ENCODE measurements at regions of chr20 and their contacts with region 1.

Region 1: DNA sequence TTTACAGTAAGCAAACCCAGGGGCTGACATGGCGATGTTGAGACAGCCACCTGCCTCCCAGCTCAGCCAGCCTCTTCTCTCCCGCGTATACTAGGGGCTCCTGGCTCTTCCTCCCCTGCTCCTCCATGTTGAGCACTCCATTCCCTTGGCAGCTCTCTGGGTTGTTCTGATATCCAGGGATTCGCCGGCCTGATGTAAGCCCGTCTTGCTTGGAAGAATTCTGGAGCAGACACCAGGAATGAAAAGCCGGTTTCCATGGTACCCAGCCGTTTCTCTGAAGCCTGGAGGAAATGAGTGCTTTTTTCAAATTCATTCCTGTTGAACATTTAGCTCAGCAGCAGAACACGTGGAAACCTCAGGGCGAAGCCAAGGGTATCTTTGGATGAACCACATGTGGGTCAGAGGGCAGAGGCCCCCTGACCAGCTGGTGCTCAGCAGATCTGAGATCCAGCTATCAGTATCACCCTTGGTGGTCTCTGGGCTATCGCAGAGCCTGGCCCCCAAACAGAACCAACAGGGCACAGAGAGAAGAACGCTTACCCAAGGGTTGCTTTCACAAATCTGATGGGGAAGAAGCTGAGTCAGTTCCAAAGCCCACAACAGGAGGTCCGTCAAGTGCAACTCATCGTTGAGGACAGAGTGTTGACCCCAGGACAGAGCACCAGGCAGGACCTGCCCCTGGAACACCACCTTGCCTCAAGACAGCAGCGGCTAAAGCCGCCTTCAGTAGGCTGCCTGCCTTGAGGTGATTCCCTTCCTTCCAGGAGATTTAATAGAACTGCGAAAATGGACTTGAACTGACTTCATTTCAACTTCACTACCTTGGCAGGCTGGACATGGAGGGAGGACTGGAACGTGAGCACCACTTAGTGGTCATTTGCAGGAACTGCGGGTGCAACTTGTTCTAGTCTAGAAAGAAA is 96.1 kb upstream of the RIN2 start:
- DNase-seq: peak; percentile 73
- ATAC-seq: peak; percentile 85
- H3K4me3 ChIP-seq: no peak overlapping the region
- H3K27ac ChIP-seq: no peak overlapping the region
- H3K4me1 ChIP-seq: no peaks in the 10 kb centered on the region
- H3K27me3 ChIP-seq: peaks cover 20% of the 10 kb centered on the region
- CTCF ChIP-seq: peak; percentile 96

Region 2: DNA sequence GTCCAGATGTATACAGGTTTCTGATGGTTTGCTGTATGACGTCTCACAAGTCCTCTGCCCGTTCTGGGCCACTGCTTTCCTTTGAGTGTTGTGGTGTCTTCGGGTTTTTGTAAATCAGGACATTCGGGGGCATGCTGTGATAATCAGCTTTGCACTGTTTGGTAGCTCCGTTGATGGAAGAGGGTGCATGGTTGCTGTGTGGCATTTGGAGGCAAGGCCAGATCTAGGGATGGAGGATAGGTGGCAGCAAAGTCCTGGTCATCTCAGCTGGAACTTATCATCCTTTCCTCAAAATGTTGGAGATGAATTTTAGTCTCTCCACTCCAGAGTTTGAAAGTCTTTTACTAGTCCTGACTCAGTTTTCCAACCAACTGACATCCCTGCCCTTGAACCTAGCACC is 757.4 kb before region 1 on chr20:
- CTCF ChIA-PET with region 1: no interaction called
- POLR2A ChIA-PET with region 1: no interaction called
- in situ Hi-C with region 1: no loop called
- intact Hi-C with region 1: loop called (anchors 10 kb)
- DNase-seq: peak; percentile 1
- ATAC-seq: no peak
- H3K4me3 ChIP-seq: no peak overlapping the region
- H3K27ac ChIP-seq: no peak overlapping the region
- H3K4me1 ChIP-seq: no peaks in the 10 kb centered on the region
- H3K27me3 ChIP-seq: no peaks in the 10 kb centered on the region
- CTCF ChIP-seq: peak; percentile 38; the same call in 1 of the 2 replicates

Region 3: GRCh38 chr20:19205977-19206396 is 456.0 kb before region 1 on chr20:
- CTCF ChIA-PET with region 1: no interaction called
- POLR2A ChIA-PET with region 1: no interaction called
- in situ Hi-C with region 1: no loop called
- intact Hi-C with region 1: loop called (anchors 5 kb)
- DNase-seq: peak; percentile 38
- ATAC-seq: peak; percentile 84
- H3K4me3 ChIP-seq: no peak overlapping the region
- H3K27ac ChIP-seq: no peak overlapping the region
- H3K4me1 ChIP-seq: no peaks in the 10 kb centered on the region
- H3K27me3 ChIP-seq: peaks cover 27% of the 10 kb centered on the region
- CTCF ChIP-seq: peak; percentile 95

Region 4: GRCh38 chr20:19628570-19629169 is 33.3 kb before region 1 on chr20:
- CTCF ChIA-PET with region 1: interaction called, 8 read pairs
- POLR2A ChIA-PET with region 1: interaction called, 4 read pairs
- in situ Hi-C with region 1: no loop called
- intact Hi-C with region 1: loop called (anchors 1 kb)
- DNase-seq: peak; percentile 43
- ATAC-seq: peak; percentile 77; the same call in 1 of the 2 replicates
- H3K4me3 ChIP-seq: no peak overlapping the region
- H3K27ac ChIP-seq: peak overlapping the region; percentile 40; the same call in 1 of the 2 replicates
- H3K4me1 ChIP-seq: no peaks in the 10 kb centered on the region
- H3K27me3 ChIP-seq: no peaks in the 10 kb centered on the region
- CTCF ChIP-seq: peak; percentile 78

Region 5: DNA sequence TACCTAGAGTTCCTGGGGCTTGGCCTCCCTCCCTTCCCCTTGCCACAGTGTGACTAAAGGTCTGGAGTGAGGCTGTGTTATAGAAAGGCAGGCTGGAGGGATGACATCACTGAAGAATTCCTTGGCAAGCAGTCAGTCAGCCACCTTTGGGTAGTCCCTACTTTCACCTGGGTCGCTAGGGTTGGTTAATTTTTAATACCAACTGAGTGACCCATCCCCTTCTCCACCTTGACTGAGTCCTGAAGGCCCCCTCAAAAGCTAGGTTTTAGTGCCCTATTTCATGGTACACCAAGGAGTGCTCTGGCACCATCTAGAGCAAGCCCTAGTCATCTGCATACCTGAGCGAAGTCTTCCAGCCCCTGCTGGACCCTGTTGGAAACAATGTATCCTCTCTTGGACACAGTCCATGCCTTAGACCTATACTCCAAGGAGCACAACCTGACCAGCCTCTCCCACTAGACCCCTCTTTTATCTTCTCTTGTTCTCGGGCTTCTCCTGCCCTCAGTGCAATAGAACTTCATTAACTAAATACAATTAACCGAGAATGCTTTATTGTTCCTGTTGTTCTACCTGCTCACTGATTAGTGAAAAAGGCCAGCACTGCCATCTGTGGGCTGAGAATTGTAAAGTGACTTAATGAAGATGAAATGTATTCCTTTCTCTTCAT is 140.6 kb after region 1 on chr20:
- CTCF ChIA-PET with region 1: no interaction called
- POLR2A ChIA-PET with region 1: no interaction called
- in situ Hi-C with region 1: no loop called
- intact Hi-C with region 1: no loop called
- DNase-seq: no peak
- ATAC-seq: peak; percentile 92
- H3K4me3 ChIP-seq: no peak overlapping the region
- H3K27ac ChIP-seq: 0 out of 2 replicates have a peak overlapping the region, but pooled peaks have one; percentile 6
- H3K4me1 ChIP-seq: peaks cover 9% of the 10 kb centered on the region
- H3K27me3 ChIP-seq: no peaks in the 10 kb centered on the region
- CTCF ChIP-seq: peak; percentile 63

Region 6: GRCh38 chr20:21251278-21251677 is 1589.3 kb after region 1 on chr20:
- CTCF ChIA-PET with region 1: no interaction called
- POLR2A ChIA-PET with region 1: no interaction called
- in situ Hi-C with region 1: no loop called
- intact Hi-C with region 1: no loop called
- DNase-seq: no peak
- ATAC-seq: no peak
- H3K4me3 ChIP-seq: no peak overlapping the region
- H3K27ac ChIP-seq: no peak overlapping the region
- H3K4me1 ChIP-seq: no peaks in the 10 kb centered on the region
- H3K27me3 ChIP-seq: no peaks in the 10 kb centered on the region
- CTCF ChIP-seq: no peak